Activated CD4-positive, alpha-beta memory T cell treated with anti-CD3 and anti-CD28 coated beads for 36 hours (primary cell): ENCODE measurements at regions of chr5 and their contacts with region 1.

Region 1: GRCh38 chr5:56328753-56329560 is 95.8 kb upstream of the ANKRD55 start:
- DNase-seq: peak; percentile 72
- H3K4me3 Mint-ChIP-seq: peak overlapping the region; percentile 6
- H3K27ac Mint-ChIP-seq: peak overlapping the region; percentile 91
- H3K4me1 Mint-ChIP-seq: peaks cover 70% of the 10 kb centered on the region
- H3K27me3 Mint-ChIP-seq: no peaks in the 10 kb centered on the region

Region 2: GRCh38 chr5:56095579-56096102 is 233.3 kb before region 1 on chr5:
- CTCF ChIA-PET with region 1: no interaction called
- POLR2A ChIA-PET with region 1: no interaction called
- intact Hi-C with region 1: loop called (anchors 10 kb)
- DNase-seq: no peak
- H3K4me3 Mint-ChIP-seq: peak overlapping the region; percentile 1
- H3K27ac Mint-ChIP-seq: peak overlapping the region; percentile 63
- H3K4me1 Mint-ChIP-seq: peaks cover 83% of the 10 kb centered on the region
- H3K27me3 Mint-ChIP-seq: no peaks in the 10 kb centered on the region

Region 3: DNA sequence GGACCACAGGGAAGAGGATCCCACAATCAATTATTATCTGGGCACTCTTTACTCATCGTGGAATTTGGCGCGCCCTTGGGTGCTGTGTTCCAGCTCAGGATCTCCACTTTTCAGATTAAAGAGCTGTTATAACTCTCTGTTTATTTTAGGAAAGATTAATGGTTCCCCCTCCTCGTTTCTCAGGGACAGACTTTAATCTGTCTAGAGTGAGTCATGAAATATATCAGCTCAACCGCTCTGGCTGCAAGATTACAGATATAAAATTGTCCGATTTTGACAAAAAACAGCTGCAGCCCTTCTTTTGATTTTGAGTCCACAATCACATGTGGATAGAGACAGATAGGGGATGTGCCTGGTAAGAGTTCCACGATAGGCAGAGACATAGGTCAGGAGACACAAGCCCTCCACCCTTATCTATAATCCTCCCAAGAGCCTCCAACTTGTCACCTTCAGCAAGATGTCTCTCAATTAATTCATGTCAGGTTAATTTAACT is 18.2 kb before region 1 on chr5:
- CTCF ChIA-PET with region 1: interaction called, 4 read pairs
- POLR2A ChIA-PET with region 1: interaction called, 14 read pairs
- intact Hi-C with region 1: loop called (anchors 1 kb)
- DNase-seq: no peak
- H3K4me3 Mint-ChIP-seq: no peak overlapping the region
- H3K27ac Mint-ChIP-seq: no peak overlapping the region
- H3K4me1 Mint-ChIP-seq: peaks cover 38% of the 10 kb centered on the region
- H3K27me3 Mint-ChIP-seq: no peaks in the 10 kb centered on the region

Region 4: DNA sequence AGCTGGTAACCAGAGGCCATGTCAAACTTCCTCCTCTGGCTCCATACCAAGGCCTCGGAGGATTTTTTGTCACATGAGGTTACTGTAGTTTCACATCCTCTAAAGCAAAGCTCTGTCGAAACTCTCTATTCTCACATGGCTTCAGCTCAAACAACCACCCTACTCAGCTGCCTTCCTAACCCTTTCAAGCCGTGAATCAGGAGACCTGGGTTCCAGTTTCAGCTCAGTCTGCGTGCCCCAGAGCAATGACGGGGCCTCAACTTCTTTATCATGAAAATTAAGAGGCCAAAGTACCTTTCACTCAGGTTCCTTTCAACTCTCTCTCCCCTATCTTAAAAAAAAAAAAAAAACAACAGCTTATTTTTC is 341.1 kb after region 1 on chr5:
- CTCF ChIA-PET with region 1: no interaction called
- POLR2A ChIA-PET with region 1: interaction called, 4 read pairs
- intact Hi-C with region 1: loop called (anchors 5 kb)
- DNase-seq: peak; percentile 68
- H3K4me3 Mint-ChIP-seq: peak overlapping the region; percentile 6
- H3K27ac Mint-ChIP-seq: peak overlapping the region; percentile 26
- H3K4me1 Mint-ChIP-seq: peaks cover 34% of the 10 kb centered on the region
- H3K27me3 Mint-ChIP-seq: no peaks in the 10 kb centered on the region

Region 5: DNA sequence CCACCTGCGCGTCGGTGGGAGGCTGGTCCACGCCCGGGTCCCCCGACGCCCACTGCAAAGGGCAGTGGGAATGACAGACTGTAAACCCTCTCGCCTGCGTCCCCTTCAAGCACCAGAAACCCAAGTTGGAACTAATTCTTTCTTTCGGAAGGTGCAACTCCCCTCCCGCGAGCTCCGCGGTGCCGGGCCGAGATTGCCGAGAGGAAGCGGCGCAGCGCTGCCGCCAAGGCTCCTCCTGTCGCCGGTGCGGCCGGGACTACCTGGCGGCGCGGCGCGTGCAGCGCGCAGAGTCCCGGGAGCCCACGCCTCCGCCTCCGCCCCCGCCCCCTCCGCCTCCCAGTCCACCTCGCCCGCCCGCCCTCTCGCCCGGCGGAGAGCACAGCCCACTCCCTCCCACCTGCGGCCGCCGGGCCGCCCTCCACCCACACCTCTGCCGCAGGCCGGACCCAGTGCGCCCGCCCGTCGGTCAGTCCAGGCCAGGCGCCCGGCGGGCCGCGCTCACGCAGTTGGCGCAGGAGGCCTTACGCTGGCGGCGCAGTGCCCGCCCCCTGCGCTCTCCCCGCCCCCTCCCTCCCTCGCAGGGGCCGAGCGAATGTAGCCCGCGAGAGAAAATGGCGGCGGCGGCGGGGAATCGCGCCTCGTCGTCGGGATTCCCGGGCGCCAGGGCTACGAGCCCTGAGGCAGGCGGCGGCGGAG is 486.2 kb after region 1 on chr5 and contains the start of gene MAP3K1:
- CTCF ChIA-PET with region 1: interaction called, 3 read pairs
- POLR2A ChIA-PET with region 1: no interaction called
- intact Hi-C with region 1: loop called (anchors 2 kb)
- DNase-seq: peak; percentile 83
- H3K4me3 Mint-ChIP-seq: peak within 1 kb of the TSS; percentile 86
- H3K27ac Mint-ChIP-seq: peak within 1 kb of the TSS; percentile 88
- H3K4me1 Mint-ChIP-seq: peaks cover 34% of the 10 kb centered on the region
- H3K27me3 Mint-ChIP-seq: no peaks in the 10 kb centered on the region
- total RNA-seq, gene MAP3K1: 20.5 to 20.6 TPM

Region 6: DNA sequence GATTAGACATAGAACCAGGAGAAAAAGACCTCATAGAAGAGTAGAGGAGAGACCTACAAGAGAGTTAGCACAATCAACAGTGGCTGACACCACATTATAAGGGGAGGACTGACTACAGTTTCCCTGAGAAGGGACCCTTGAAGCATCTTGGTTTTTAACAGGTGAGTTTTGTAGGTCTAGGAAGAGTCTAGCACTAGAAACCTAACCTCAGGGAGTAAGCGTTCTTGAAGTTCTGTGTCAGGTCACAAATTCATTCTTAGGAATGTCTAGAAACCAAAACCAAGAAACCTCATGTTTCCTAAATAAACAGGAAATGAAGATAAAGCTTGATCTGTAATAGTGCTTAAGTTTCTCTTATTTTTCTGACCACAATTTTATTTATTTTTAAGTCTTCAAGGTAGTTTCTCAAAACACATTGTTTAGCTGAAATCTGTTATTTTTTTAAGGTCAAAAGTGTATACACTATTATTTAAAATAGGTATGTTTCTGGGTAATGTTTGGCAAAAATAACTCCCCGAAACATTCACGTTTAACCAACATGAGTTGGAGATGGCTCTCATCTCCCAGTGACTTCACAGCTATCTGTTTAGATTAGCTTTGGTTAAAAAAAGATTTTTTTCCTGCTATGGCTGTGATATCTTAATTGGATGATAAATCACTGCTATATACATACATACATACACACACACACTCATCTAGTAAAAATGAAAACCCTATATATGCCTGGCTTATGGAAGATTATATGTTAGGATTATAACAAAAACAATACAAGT is 523.5 kb after region 1 on chr5:
- CTCF ChIA-PET with region 1: no interaction called
- POLR2A ChIA-PET with region 1: no interaction called
- intact Hi-C with region 1: no loop called
- DNase-seq: no peak
- H3K4me3 Mint-ChIP-seq: peak overlapping the region; percentile 17
- H3K27ac Mint-ChIP-seq: peak overlapping the region; percentile 61
- H3K4me1 Mint-ChIP-seq: peaks cover 78% of the 10 kb centered on the region
- H3K27me3 Mint-ChIP-seq: no peaks in the 10 kb centered on the region